CD4-positive, alpha-beta memory T cell (primary cell): ENCODE measurements at regions of chr18 and their contacts with region 1.

Region 1: DNA sequence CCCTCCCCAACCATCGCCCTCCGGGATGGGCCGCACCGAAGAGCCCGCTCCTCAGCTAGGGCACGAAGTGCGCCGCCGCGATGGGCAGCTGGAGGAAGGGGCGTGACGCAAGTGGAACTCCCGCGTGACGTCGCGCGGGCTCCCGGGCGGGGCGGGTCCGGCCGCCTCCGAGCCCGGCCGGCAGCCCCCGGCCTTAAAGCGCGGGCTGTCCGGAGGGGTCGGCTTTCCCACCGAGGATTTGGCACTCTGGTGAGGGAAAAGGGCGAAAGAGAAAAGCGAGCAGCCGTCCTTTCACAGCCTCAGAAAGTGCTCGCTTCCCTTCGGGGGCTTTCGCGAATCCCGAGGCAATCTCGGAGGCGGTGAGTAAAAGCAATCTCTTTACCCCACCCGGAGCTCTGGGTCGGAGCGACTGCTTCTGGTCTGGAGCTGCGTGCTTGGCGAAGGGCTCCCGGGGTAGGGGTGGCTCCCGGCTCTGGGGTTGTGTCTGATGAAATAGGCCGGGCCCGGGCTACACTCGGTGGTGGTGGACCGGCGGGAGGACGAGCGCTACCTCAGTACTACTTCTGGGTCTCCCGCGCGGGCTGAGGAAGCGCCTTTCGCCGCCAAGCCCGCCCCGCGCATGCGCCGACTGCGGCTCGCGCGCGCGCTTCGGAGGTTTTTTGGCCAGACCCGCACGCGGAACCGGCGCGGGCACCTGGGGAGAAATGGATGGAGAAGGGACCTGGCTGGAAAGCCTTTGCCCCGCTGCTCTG is at the start of gene RBBP8:
- DNase-seq: peak; percentile 70 to 90 (median 86)
- H3K4me3 ChIP-seq: peak within 1 kb of the TSS; percentile 59 to 90
- H3K4me3 Mint-ChIP-seq: peak within 1 kb of the TSS; percentile 85 to 94 (median 88)
- H3K27ac ChIP-seq: peak within 1 kb of the TSS; percentile 82
- H3K27ac Mint-ChIP-seq: peak within 1 kb of the TSS; percentile 79 to 98 (median 93)
- H3K4me1 ChIP-seq: peaks cover 7% of the 10 kb centered on the region
- H3K4me1 Mint-ChIP-seq: peaks cover 10 to 16% (median 12%) of the 10 kb centered on the region in 4 donors
- H3K27me3 ChIP-seq: no peaks in the 10 kb centered on the region
- H3K27me3 Mint-ChIP-seq: no peaks in the 10 kb centered on the region
- total RNA-seq, gene RBBP8: 1.4 to 3.0 TPM

Region 2: GRCh38 chr18:22913857-22914256 is 19.5 kb before region 1 on chr18:
- CTCF ChIA-PET with region 1: interaction called, 12 read pairs
- POLR2A ChIA-PET with region 1: interaction called, 4 read pairs
- intact Hi-C with region 1: no loop called
- DNase-seq: no peak
- H3K4me3 ChIP-seq: no peak overlapping the region
- H3K4me3 Mint-ChIP-seq: no peak overlapping the region
- H3K27ac ChIP-seq: no peak overlapping the region
- H3K27ac Mint-ChIP-seq: peak overlapping the region in 1 of 7 donors; percentile 2
- H3K4me1 ChIP-seq: no peaks in the 10 kb centered on the region
- H3K4me1 Mint-ChIP-seq: no peaks in the 10 kb centered on the region
- H3K27me3 ChIP-seq: no peaks in the 10 kb centered on the region
- H3K27me3 Mint-ChIP-seq: no peaks in the 10 kb centered on the region

Region 3: GRCh38 chr18:23071285-23071684 is 137.9 kb after region 1 on chr18:
- CTCF ChIA-PET with region 1: interaction called, 4 read pairs
- POLR2A ChIA-PET with region 1: no interaction called
- intact Hi-C with region 1: loop called (anchors 2 kb)
- DNase-seq: peak; percentile 87 to 93 (median 90)
- H3K4me3 ChIP-seq: peak overlapping the region in 1 of 2 donors; percentile 13
- H3K4me3 Mint-ChIP-seq: peak overlapping the region; percentile 37 to 95 (median 76)
- H3K27ac ChIP-seq: no peak overlapping the region
- H3K27ac Mint-ChIP-seq: peak overlapping the region; percentile 74 to 96 (median 92)
- H3K4me1 ChIP-seq: peaks cover 64% of the 10 kb centered on the region
- H3K4me1 Mint-ChIP-seq: peaks cover 51 to 79% (median 59%) of the 10 kb centered on the region in 4 donors
- H3K27me3 ChIP-seq: no peaks in the 10 kb centered on the region
- H3K27me3 Mint-ChIP-seq: no peaks in the 10 kb centered on the region

Region 4: GRCh38 chr18:23356915-23357601 is 423.7 kb after region 1 on chr18:
- CTCF ChIA-PET with region 1: interaction called, 3 read pairs
- POLR2A ChIA-PET with region 1: no interaction called
- intact Hi-C with region 1: loop called (anchors 2 kb)
- DNase-seq: no peak
- H3K4me3 ChIP-seq: no peak overlapping the region
- H3K4me3 Mint-ChIP-seq: no peak overlapping the region
- H3K27ac ChIP-seq: no peak overlapping the region
- H3K27ac Mint-ChIP-seq: no peak overlapping the region
- H3K4me1 ChIP-seq: peaks cover 12% of the 10 kb centered on the region
- H3K4me1 Mint-ChIP-seq: peaks cover 4 to 15% (median 10%) of the 10 kb centered on the region in 4 donors
- H3K27me3 ChIP-seq: no peaks in the 10 kb centered on the region
- H3K27me3 Mint-ChIP-seq: no peaks in the 10 kb centered on the region

Region 5: GRCh38 chr18:23452728-23453679 is 519.6 kb after region 1 on chr18 and contains the start of gene RIOK3:
- CTCF ChIA-PET with region 1: no interaction called
- POLR2A ChIA-PET with region 1: no interaction called
- intact Hi-C with region 1: loop called (anchors 5 kb)
- DNase-seq: peak; percentile 79 to 91 (median 82)
- H3K4me3 ChIP-seq: peak within 1 kb of the TSS; percentile 95
- H3K4me3 Mint-ChIP-seq: peak within 1 kb of the TSS; percentile 94 to 100 (median 100)
- H3K27ac ChIP-seq: peak within 1 kb of the TSS; percentile 92
- H3K27ac Mint-ChIP-seq: peak within 1 kb of the TSS; percentile 89 to 98 (median 94)
- H3K4me1 ChIP-seq: peaks cover 41% of the 10 kb centered on the region
- H3K4me1 Mint-ChIP-seq: peaks cover 21 to 54% (median 35%) of the 10 kb centered on the region in 4 donors
- H3K27me3 ChIP-seq: no peaks in the 10 kb centered on the region
- H3K27me3 Mint-ChIP-seq: peaks cover 0 to 1% of the 10 kb centered on the region in 2 donors
- total RNA-seq, gene RIOK3: 73.2 to 84.4 TPM